Heart right ventricle (tissue), 16 donors: ENCODE measurements at regions of chr5 and their contacts with region 1.

Region 1: GRCh38 chr5:141664732-141665461 is 13.7 kb upstream of the FCHSD1 start:
- DNase-seq: peak; percentile 70 to 79
- ATAC-seq: peak; percentile 75 to 85 (median 80)
- H3K4me3 ChIP-seq: no peak overlapping the region
- H3K27ac ChIP-seq: no peak overlapping the region
- H3K4me1 ChIP-seq: peaks cover 0 to 10% (median 4%) of the 10 kb centered on the region in 9 donors
- H3K27me3 ChIP-seq: no peaks in the 10 kb centered on the region
- CTCF ChIP-seq: peak; percentile 76 to 93 (median 89)

Region 2: GRCh38 chr5:141747152-141748141 is 82.5 kb after region 1 on chr5:
- intact Hi-C with region 1: no loop called
- DNase-seq: peak; percentile 88 to 90
- ATAC-seq: peak; percentile 86 to 97 (median 93)
- H3K4me3 ChIP-seq: no peak overlapping the region
- H3K27ac ChIP-seq: no peak overlapping the region
- H3K4me1 ChIP-seq: peaks cover 0 to 12% (median 5%) of the 10 kb centered on the region in 9 donors
- H3K27me3 ChIP-seq: peaks cover 0 to 29% (median 10%) of the 10 kb centered on the region in 7 donors
- CTCF ChIP-seq: no peak

Region 3: GRCh38 chr5:142201471-142201887 is 536.6 kb after region 1 on chr5:
- intact Hi-C with region 1: no loop called
- DNase-seq: no peak
- ATAC-seq: peak in 2 of 8 donors; percentile 19 to 26
- H3K4me3 ChIP-seq: no peak overlapping the region
- H3K27ac ChIP-seq: no peak overlapping the region
- H3K4me1 ChIP-seq: no peaks in the 10 kb centered on the region
- H3K27me3 ChIP-seq: no peaks in the 10 kb centered on the region
- CTCF ChIP-seq: no peak

Region 4: DNA sequence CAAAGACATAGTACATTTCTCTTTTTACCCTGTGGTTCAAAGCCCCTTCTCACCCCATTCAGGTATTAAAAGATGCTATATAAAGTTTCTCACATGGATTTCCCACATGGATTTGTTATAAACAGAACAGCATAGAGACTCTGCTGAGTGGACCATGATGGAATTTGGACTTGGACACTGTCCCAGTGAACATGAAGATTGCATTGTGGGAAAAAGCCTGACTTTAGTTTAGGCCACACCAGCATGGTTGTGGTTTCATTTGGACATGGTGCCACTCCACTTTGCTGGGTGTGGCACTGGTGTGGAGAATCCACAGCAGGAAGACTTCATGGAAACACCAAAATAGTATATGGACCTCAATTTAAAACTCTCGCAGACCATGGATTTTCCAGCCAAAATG is 1229.9 kb after region 1 on chr5:
- intact Hi-C with region 1: loop called in 1 of 10 experiments (anchors 10 kb)
- DNase-seq: peak in 1 of 2 donors; percentile 43
- ATAC-seq: peak in 7 of 8 donors; percentile 20 to 67 (median 61)
- H3K4me3 ChIP-seq: no peak overlapping the region
- H3K27ac ChIP-seq: peak overlapping the region in 3 of 10 donors; percentile 4 to 35 (median 15)
- H3K4me1 ChIP-seq: peaks cover 0 to 34% (median 19%) of the 10 kb centered on the region in 9 donors
- H3K27me3 ChIP-seq: no peaks in the 10 kb centered on the region
- CTCF ChIP-seq: no peak